ENCODE measurements at regions of chr5 and their contacts with region 1.

Region 1: DNA sequence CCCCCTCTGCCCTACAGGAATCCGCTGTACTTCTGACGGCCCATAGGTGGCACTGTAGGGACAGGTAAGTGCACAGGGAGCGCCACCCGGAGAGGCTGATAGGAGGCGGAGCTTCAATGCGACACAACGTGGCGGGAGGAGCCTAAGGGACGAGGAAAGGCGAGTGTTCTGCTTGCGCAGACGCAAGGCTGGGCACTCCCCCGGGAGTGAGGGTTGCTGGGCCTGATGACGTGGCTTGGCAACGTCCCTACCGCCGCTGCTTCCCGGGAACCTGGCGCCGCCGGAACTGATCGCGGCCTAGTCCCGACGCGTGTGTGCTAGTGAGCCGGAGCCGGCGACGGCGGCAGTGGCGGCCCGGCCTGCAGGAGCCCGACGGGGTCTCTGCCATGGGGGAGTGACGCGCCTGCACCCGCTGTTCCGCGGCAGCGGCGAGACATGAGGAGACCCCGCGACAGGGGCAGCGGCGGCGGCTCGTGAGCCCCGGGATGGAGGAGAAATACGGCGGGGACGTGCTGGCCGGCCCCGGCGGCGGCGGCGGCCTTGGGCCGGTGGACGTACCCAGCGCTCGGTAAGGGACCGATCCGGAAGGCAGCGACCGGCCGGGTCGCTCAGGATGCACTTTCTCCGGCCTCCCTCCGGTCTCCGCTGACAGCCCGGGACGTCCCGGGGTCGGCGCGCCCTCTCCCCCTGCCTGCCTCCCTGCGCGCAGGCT is at the start of gene SLC30A5:
- DNase-seq: peak; percentile 83 to 99 (median 98)
- ATAC-seq: peak; percentile 99
- H3K4me3 ChIP-seq: peak within 1 kb of the TSS; percentile 70
- H3K4me3 Mint-ChIP-seq: peak within 1 kb of the TSS; percentile 89 to 94 (median 93)
- H3K27ac ChIP-seq: peak within 1 kb of the TSS; percentile 98
- H3K27ac Mint-ChIP-seq: peak within 1 kb of the TSS; percentile 84 to 98 (median 95)
- H3K4me1 ChIP-seq: peaks cover 9 to 17% of the 10 kb centered on the region in 2 donors
- H3K4me1 Mint-ChIP-seq: peaks cover 17 to 49% (median 37%) of the 10 kb centered on the region in 7 donors
- H3K27me3 ChIP-seq: no peaks in the 10 kb centered on the region
- H3K27me3 Mint-ChIP-seq: no peaks in the 10 kb centered on the region
- total RNA-seq, gene SLC30A5: 15.9 to 46.5 (median 41.3) TPM

Region 2: GRCh38 chr5:69166686-69167492 is 73.0 kb after region 1 on chr5 and contains the start of gene CCNB1:
- CTCF ChIA-PET with region 1: interaction called, 3 read pairs
- POLR2A ChIA-PET with region 1: no interaction called
- intact Hi-C with region 1: loop called (anchors 1 kb)
- DNase-seq: peak; percentile 91 to 98 (median 94)
- ATAC-seq: peak; percentile 100
- H3K4me3 ChIP-seq: peak within 1 kb of the TSS; percentile 78
- H3K4me3 Mint-ChIP-seq: peak within 1 kb of the TSS; percentile 88 to 98 (median 94)
- H3K27ac ChIP-seq: peak within 1 kb of the TSS; percentile 68
- H3K27ac Mint-ChIP-seq: peak within 1 kb of the TSS; percentile 77 to 94 (median 90)
- H3K4me1 ChIP-seq: peaks cover 5 to 15% of the 10 kb centered on the region in 2 donors
- H3K4me1 Mint-ChIP-seq: peaks cover 17 to 44% (median 26%) of the 10 kb centered on the region in 7 donors
- H3K27me3 ChIP-seq: no peaks in the 10 kb centered on the region
- H3K27me3 Mint-ChIP-seq: no peaks in the 10 kb centered on the region
- total RNA-seq, gene CCNB1: 1.3 to 110 (median 3.4) TPM

Region 3: DNA sequence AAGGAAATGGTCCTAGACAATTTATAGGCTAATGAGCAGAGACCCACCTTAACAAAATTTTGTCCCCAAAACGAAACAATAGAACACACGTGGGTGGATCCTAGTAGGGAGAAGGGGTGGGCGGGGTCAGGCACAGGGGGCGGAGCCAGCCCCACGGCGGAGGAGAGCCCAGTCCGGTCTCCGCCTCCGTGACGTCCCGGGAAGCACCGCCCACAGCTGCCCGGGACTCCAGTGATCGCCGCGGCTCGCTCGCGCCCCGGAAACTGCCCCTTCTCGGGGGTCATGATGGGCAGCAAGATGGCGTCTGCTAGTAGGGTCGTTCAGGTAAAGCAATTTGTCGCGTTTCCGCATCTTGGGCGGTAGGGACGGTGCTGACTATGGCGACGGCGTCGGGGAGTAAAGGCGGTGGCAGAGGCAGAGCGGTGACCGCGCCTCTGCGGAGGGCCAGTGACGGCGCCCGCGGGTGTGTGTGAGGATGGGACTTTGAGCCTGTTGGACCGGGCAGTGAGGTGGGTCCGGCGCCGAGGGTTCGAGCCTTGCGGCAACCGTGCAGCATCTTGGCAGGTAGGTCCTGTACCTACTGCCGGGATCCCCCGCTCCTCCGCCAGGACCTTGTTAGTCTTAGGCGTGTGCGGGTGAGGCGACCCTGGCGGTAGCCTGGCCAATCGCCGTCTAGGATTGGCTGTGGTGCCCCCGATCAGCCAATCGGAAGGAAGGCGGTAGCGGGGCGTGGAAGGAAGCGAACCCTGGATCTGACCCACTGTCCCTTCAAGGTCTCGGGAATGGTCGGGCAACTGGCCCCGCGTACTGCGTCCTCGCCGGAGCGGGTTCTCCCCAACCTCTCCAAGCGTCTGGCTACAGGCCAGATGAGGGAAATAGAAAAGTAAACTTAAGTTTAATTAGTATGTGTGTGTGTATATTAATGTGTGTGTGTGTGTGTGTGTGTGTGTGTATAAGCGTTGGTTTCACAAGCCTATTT is 123.9 kb after region 1 on chr5:
- CTCF ChIA-PET with region 1: no interaction called
- POLR2A ChIA-PET with region 1: no interaction called
- intact Hi-C with region 1: loop called (anchors 1 kb)
- DNase-seq: peak; percentile 81 to 93 (median 86)
- ATAC-seq: peak; percentile 97
- H3K4me3 ChIP-seq: peak overlapping the region; percentile 100
- H3K4me3 Mint-ChIP-seq: peak overlapping the region; percentile 95 to 99 (median 96)
- H3K27ac ChIP-seq: peak overlapping the region; percentile 92
- H3K27ac Mint-ChIP-seq: peak overlapping the region; percentile 96 to 99 (median 97)
- H3K4me1 ChIP-seq: peaks cover 5 to 8% of the 10 kb centered on the region in 2 donors
- H3K4me1 Mint-ChIP-seq: peaks cover 2 to 37% (median 29%) of the 10 kb centered on the region in 7 donors
- H3K27me3 ChIP-seq: no peaks in the 10 kb centered on the region
- H3K27me3 Mint-ChIP-seq: no peaks in the 10 kb centered on the region

Region 4: GRCh38 chr5:69369369-69370121 is 275.6 kb after region 1 on chr5 and contains the starts of genes AK6, RAD17 and TAF9:
- CTCF ChIA-PET with region 1: no interaction called
- POLR2A ChIA-PET with region 1: interaction called, 6 read pairs
- intact Hi-C with region 1: loop called (anchors 1 kb)
- DNase-seq: peak; percentile 90 to 99 (median 95)
- ATAC-seq: peak; percentile 95
- H3K4me3 ChIP-seq: peak within 1 kb of the TSS; percentile 97
- H3K4me3 Mint-ChIP-seq: peak within 1 kb of the TSS; percentile 91 to 100 (median 97)
- H3K27ac ChIP-seq: peak within 1 kb of the TSS; percentile 99
- H3K27ac Mint-ChIP-seq: peak within 1 kb of the TSS; percentile 95 to 100 (median 99)
- H3K4me1 ChIP-seq: peaks cover 18 to 20% of the 10 kb centered on the region in 2 donors
- H3K4me1 Mint-ChIP-seq: peaks cover 20 to 63% (median 51%) of the 10 kb centered on the region in 7 donors
- H3K27me3 ChIP-seq: no peaks in the 10 kb centered on the region
- H3K27me3 Mint-ChIP-seq: no peaks in the 10 kb centered on the region
- total RNA-seq, gene AK6: 12.4 to 30.2 (median 24.0) TPM
- total RNA-seq, gene RAD17: 19.7 to 32.0 (median 26.3) TPM
- total RNA-seq, gene TAF9: 48.5 to 54.1 (median 50.4) TPM